AG04450 (cell line): ENCODE measurements at regions of chr1 and their contacts with region 1.

Region 1: DNA sequence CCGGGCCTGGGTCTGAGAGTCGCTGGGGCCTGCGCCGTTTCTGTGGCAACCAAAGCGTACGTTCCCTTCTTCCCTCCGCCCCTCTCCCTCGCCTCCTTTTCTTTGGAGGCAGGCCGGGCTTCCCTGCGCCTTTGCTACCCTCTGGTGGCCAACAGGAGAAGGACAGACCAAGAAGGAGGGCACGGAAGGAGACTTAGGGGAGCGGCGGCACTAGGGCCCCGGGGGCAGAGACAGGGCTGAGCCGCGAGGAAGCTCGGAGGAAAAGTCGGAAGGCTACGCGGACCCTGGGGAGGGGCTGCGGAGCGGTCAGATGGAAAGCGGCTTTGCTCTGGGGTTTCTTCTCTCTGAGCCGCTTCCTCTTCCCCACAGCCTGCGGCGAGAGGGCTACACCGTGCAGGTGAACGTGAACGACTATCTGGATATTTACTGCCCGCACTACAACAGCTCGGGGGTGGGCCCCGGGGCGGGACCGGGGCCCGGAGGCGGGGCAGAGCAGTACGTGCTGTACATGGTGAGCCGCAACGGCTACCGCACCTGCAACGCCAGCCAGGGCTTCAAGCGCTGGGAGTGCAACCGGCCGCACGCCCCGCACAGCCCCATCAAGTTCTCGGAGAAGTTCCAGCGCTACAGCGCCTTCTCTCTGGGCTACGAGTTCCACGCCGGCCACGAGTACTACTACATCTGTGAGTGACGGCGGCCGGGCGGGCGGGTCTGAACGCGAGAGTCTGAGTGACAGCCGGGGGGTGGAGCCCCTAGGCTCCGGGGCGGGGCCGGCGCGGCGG is 6.3 kb downstream of the EFNA3 start:
- DNase-seq: peak; percentile 86
- H3K4me3 ChIP-seq: peak overlapping the region; percentile 86
- H3K27ac ChIP-seq: peak overlapping the region; percentile 12
- H3K27me3 ChIP-seq: peaks cover 45% of the 10 kb centered on the region
- CTCF ChIP-seq: peak; percentile 92

Region 2: DNA sequence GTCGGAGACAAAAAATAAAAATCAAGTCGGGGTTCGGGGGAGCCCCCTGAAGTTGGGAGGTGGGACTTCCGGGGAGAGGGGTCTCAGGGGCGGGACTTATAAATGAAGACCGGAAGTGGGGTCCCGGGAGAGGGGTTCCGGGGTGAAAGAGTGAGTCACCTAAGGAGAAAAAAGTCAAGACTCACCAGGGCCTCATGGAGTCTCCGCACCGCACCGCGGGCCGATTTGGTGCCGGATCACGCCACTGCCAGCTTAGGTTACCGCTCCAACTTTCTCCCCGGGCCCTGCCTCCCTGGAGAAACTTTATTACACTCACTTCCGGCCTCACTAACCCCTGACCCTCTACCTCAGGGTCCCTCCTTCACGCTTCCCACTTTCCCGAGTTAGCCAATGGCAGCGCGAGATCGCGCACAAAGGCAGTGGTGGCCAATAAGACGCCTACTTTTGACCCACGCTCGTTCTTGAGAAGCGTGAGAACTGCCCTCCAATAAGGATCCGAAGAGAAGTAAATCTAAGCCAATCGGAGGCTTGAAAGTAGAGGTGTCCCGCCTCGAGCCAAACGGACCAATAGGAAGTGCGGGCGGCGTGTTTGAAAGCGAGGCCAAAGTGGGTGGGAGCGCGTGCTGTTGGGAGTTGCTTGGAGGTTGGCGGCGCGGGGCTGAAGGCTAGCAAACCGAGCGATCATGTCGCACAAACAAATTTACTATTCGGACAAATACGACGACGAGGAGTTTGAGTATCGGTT is 110.7 kb before region 1 on chr1 and contains the start of gene CKS1B:
- CTCF ChIA-PET with region 1: no interaction called
- POLR2A ChIA-PET with region 1: interaction called, 10 read pairs
- DNase-seq: peak; percentile 100
- H3K4me3 ChIP-seq: peak within 1 kb of the TSS; percentile 77
- H3K27ac ChIP-seq: peak within 1 kb of the TSS; percentile 100
- H3K27me3 ChIP-seq: no peaks in the 10 kb centered on the region
- CTCF ChIP-seq: no peak
- polyA plus RNA-seq, gene CKS1B: 66.4 and 81.3 TPM in 2 replicates

Region 3: GRCh38 chr1:155044812-155045690 is 39.9 kb before region 1 on chr1:
- CTCF ChIA-PET with region 1: interaction called, 31 read pairs
- POLR2A ChIA-PET with region 1: interaction called, 5 read pairs
- DNase-seq: peak; percentile 45
- H3K4me3 ChIP-seq: no peak overlapping the region
- H3K27ac ChIP-seq: no peak overlapping the region
- H3K27me3 ChIP-seq: peaks cover 9% of the 10 kb centered on the region
- CTCF ChIP-seq: peak; percentile 75

Region 4: GRCh38 chr1:155063550-155064110 is 21.3 kb before region 1 on chr1 and contains the start of gene EFNA4:
- CTCF ChIA-PET with region 1: interaction called, 27 read pairs
- POLR2A ChIA-PET with region 1: no interaction called
- DNase-seq: peak; percentile 36
- H3K4me3 ChIP-seq: peak within 1 kb of the TSS; percentile 96
- H3K27ac ChIP-seq: peak within 1 kb of the TSS; percentile 80
- H3K27me3 ChIP-seq: no peaks in the 10 kb centered on the region
- CTCF ChIP-seq: no peak
- polyA plus RNA-seq, gene EFNA4: 10.1 and 12.9 TPM in 2 replicates

Region 5: GRCh38 chr1:155167166-155168104 is 82.5 kb after region 1 on chr1:
- CTCF ChIA-PET with region 1: interaction called, 317 read pairs
- POLR2A ChIA-PET with region 1: interaction called, 8 read pairs
- DNase-seq: peak; percentile 54
- H3K4me3 ChIP-seq: no peak overlapping the region
- H3K27ac ChIP-seq: no peak overlapping the region
- H3K27me3 ChIP-seq: no peaks in the 10 kb centered on the region
- CTCF ChIP-seq: peak; percentile 89